Common myeloid progenitor, CD34-positive (primary cell): ENCODE measurements at regions of chr3 and their contacts with region 1.

Region 1: GRCh38 chr3:118884748-118885206 is 149.9 kb downstream of the IGSF11 start:
- DNase-seq: peak; percentile 44 to 70 (median 64)
- H3K4me3 ChIP-seq: no peak overlapping the region
- H3K27ac ChIP-seq: no peak overlapping the region
- H3K4me1 ChIP-seq: no peaks in the 10 kb centered on the region
- H3K27me3 ChIP-seq: peaks cover 0 to 3% (median 1%) of the 10 kb centered on the region in 5 experiments

Region 2: GRCh38 chr3:118868051-118868450 is 16.7 kb before region 1 on chr3:
- CTCF ChIA-PET with region 1: interaction called, 47 read pairs
- POLR2A ChIA-PET with region 1: no interaction called
- DNase-seq: no peak
- H3K4me3 ChIP-seq: no peak overlapping the region
- H3K27ac ChIP-seq: no peak overlapping the region
- H3K4me1 ChIP-seq: no peaks in the 10 kb centered on the region
- H3K27me3 ChIP-seq: no peaks in the 10 kb centered on the region

Region 3: DNA sequence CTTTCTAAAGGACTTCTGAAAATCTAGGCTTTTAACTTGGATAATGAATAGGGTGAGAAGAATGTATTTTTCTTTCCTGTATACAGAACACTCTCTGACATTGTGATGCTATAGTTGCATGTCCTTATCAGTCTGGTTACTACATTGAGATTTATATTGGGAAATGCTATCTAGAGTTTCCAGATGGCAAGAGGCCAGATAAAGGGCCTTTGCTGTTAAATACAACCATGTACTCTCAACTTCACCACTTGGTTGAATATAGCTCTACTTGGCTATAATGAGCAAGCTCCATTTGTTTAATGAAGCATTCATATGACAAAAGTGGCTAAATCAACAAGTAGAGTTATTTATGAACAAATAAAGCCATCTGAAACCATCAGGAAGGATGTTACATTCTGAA is 58.8 kb after region 1 on chr3:
- CTCF ChIA-PET with region 1: no interaction called
- POLR2A ChIA-PET with region 1: no interaction called
- DNase-seq: no peak
- H3K4me3 ChIP-seq: no peak overlapping the region
- H3K27ac ChIP-seq: no peak overlapping the region
- H3K4me1 ChIP-seq: no peaks in the 10 kb centered on the region
- H3K27me3 ChIP-seq: no peaks in the 10 kb centered on the region

Region 4: DNA sequence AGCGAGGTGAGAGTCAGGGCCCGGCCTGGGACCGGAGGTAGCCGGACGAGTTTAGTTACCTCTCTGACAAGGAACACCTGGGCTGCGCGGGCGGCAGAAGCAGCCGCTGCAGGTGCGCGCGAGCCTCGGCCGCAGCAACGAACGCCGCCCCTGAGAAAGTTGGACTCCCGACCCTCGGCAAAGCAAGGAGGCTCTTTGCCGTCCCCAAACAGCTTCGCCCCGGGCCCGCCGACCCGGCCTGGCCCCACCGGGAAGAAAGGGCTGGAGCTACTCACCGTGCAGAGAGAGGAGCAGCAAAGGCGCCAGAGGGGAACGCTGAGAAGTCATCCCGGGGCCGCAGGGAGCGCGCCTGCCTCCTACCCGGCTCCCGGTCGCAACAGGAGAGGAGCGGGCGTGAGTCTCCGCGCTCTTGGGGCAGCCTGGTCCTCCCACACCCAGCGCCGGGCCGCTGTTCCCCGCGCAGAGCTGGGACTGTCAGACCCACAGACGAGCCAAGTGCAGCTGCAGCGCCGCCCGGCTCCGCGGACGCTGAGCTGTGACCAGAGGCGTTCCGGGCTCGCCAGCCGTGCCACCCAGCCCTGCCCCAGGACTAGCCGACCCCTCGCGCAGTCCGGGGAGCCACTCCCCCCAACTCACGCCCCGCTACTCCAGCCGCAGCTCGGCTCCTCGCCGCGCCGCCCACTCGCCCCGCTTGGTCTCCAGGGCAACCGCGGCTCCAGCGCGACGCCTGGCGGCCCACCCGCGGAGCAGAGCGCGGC is 149.7 kb after region 1 on chr3 and contains the start of gene IGSF11:
- CTCF ChIA-PET with region 1: interaction called, 23 read pairs
- POLR2A ChIA-PET with region 1: no interaction called
- DNase-seq: peak; percentile 56 to 82 (median 76)
- H3K4me3 ChIP-seq: peak within 1 kb of the TSS; percentile 36 to 80 (median 61)
- H3K27ac ChIP-seq: no peak within 1 kb of the TSS
- H3K4me1 ChIP-seq: peaks cover 2 to 14% (median 11%) of the 10 kb centered on the region in 4 experiments
- H3K27me3 ChIP-seq: peaks cover 17 to 67% (median 25%) of the 10 kb centered on the region in 5 experiments

Region 5: DNA sequence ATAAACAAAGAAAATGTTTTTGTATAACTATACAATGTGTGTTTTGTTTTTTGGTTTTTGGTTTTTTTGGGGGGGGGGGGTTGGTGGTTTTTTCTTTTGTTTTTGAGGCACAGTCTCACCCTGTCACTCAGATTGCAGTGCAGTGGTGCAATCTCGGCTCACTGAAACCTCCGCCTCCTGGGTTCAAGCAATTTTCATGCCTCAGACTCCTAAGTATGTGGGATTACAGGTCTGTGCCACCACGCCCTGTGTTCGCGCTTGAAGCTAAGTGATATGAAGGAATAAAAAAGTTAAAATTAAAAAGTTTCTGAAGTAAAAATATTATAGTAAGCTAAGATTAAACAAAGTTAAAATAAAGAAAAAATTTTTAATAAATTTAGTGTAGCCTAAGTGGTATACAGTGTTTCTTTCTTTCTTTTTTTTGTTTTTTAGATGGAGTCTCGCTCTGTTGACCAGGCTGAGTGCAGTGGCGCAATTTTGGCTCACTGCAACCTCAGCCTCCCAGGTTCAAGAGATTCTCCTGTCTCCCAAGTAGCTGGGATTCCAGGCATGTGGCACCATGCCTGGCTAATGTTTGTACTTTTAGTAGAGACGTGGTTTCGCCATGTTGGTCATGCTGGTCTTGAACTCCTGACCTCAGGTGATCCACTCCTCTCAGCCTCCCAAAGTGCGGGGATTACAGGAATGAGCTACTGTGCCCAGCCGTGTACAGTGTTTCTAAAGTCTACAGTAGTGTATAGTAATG is 207.3 kb after region 1 on chr3:
- CTCF ChIA-PET with region 1: interaction called, 129 read pairs
- POLR2A ChIA-PET with region 1: no interaction called
- DNase-seq: no peak
- H3K4me3 ChIP-seq: no peak overlapping the region
- H3K27ac ChIP-seq: no peak overlapping the region
- H3K4me1 ChIP-seq: no peaks in the 10 kb centered on the region
- H3K27me3 ChIP-seq: peaks cover 0 to 2% (median 0%) of the 10 kb centered on the region in 5 experiments

Region 6: DNA sequence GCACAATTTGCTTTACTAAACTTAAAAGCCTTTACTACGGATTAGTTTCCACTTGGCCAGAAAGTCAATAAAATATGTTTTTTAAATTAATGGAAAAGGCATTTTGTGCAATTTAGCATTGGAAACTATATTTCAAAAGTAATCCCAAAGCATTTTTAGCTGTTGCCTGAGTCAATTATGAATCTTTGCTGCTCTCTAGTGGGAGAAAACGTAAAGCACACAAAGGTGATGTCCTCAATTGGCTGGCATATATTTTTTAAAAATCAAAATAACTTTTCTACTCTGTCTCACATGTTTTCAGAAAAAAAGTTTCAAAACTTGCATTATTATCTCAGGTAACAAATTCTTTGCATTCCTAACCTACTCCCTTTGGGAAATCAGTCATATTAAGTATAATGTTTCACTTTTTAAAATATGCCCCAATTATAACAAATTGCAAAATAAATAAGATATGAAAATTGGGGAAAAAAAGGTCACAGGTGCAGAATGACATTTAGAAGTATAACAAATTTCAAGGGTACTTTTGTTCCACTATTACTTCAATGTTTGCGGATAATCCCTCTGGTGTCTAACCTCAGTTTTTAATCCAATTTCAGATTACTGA is 213.9 kb after region 1 on chr3:
- CTCF ChIA-PET with region 1: interaction called, 129 read pairs
- POLR2A ChIA-PET with region 1: no interaction called
- DNase-seq: peak; percentile 22 to 61 (median 43)
- H3K4me3 ChIP-seq: no peak overlapping the region
- H3K27ac ChIP-seq: no peak overlapping the region
- H3K4me1 ChIP-seq: no peaks in the 10 kb centered on the region
- H3K27me3 ChIP-seq: peaks cover 0 to 9% (median 0%) of the 10 kb centered on the region in 5 experiments

Region 7: DNA sequence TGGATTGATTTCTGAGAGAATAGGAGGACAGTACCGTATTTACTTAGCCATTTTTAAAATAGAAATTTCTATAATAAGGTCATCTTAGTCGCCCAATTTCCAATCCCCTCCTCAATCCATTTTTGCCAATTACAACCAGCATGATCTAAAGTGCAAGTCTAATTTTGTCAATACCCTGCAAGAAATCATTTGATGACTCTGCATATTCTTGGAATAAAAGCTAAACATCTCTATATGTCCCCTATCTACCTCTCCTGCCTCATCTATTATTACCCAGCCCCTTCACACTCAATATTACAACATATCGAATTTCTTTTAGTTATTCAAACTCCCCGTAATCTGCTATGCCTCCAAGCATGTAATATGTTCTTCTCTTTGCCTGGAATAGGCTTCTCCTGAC is 219.3 kb after region 1 on chr3:
- CTCF ChIA-PET with region 1: interaction called, 129 read pairs
- POLR2A ChIA-PET with region 1: no interaction called
- DNase-seq: no peak
- H3K4me3 ChIP-seq: no peak overlapping the region
- H3K27ac ChIP-seq: no peak overlapping the region
- H3K4me1 ChIP-seq: no peaks in the 10 kb centered on the region
- H3K27me3 ChIP-seq: peaks cover 0 to 9% (median 2%) of the 10 kb centered on the region in 5 experiments

Region 8: DNA sequence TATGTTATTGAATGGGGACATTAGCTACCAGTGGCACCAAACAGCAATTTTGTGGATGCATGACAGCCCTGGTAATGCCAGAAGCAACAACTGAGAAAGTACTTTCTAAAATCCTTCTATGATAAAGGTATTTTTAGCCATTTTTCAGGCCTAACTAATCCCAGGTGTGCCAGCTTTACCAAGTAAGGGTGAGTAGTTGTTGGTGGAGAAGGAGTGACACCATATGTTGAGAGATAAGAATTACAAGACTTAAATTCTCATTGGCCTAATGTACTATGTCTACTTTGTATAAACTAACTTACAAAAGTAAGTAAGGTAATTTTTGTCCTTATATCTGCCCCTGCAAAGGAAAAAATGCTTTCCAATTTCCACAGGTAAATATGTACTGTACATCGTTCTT is 796.5 kb after region 1 on chr3:
- CTCF ChIA-PET with region 1: interaction called, 21 read pairs
- POLR2A ChIA-PET with region 1: no interaction called
- DNase-seq: peak; percentile 40 to 71 (median 65)
- H3K4me3 ChIP-seq: no peak overlapping the region
- H3K27ac ChIP-seq: no peak overlapping the region
- H3K4me1 ChIP-seq: peaks cover 2 to 9% (median 6%) of the 10 kb centered on the region in 4 experiments
- H3K27me3 ChIP-seq: no peaks in the 10 kb centered on the region